ENCODE measurements at regions of chrX and their contacts with region 1.

Region 1: GRCh38 chrX:109872021-109872732 is 130.7 kb upstream of the TMEM164 start:
- DNase-seq: no peak

Region 2: DNA sequence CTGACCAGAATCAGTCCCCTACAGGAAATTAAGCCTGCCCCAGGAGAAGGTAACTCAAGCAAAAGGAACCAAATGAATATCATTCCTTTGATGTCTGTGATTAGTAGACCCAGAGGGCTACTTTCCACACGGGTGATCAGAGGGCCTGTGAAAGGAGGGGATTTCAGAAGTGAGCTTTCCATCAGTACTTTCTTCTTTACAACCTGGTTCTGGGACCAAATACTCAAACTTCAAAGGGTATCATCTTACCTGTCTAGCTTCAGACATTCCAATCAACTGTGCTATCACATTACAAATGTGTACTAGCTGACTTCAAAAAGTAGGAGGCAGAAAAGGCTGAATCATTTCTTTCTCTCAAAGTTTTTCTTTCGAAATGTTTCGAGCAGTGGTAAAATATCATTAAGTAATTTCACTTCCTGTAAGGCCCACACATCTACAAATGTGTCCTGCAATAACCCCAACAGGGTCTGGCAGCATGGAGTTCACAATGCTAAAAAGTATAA is 163.0 kb before region 1 on chrX:
- CTCF ChIA-PET with region 1: interaction called, 10 read pairs
- POLR2A ChIA-PET with region 1: no interaction called
- DNase-seq: no peak

Measured in HEK293T (cell line).